Left colon (tissue), 2 donors: ENCODE measurements at regions of chr10 and their contacts with region 1.

Region 1: GRCh38 chr10:6401562-6402348 is 178.3 kb downstream of the PRKCQ start:
- DNase-seq: peak; percentile 71 to 74
- ATAC-seq: peak; percentile 99

Region 2: GRCh38 chr10:6088721-6089390 is 312.9 kb before region 1 on chr10 and contains the start of gene RBM17:
- intact Hi-C with region 1: loop called in 1 of 2 experiments (anchors 10 kb)
- DNase-seq: peak; percentile 95 to 96
- ATAC-seq: peak; percentile 90
- total RNA-seq, gene RBM17: 71.7 to 90.7 TPM

Region 3: GRCh38 chr10:6108603-6109443 is 292.9 kb before region 1 on chr10:
- intact Hi-C with region 1: loop called in 1 of 2 experiments (anchors 2 kb)
- DNase-seq: peak in 1 of 2 donors; percentile 42
- ATAC-seq: peak; percentile 72

Region 4: DNA sequence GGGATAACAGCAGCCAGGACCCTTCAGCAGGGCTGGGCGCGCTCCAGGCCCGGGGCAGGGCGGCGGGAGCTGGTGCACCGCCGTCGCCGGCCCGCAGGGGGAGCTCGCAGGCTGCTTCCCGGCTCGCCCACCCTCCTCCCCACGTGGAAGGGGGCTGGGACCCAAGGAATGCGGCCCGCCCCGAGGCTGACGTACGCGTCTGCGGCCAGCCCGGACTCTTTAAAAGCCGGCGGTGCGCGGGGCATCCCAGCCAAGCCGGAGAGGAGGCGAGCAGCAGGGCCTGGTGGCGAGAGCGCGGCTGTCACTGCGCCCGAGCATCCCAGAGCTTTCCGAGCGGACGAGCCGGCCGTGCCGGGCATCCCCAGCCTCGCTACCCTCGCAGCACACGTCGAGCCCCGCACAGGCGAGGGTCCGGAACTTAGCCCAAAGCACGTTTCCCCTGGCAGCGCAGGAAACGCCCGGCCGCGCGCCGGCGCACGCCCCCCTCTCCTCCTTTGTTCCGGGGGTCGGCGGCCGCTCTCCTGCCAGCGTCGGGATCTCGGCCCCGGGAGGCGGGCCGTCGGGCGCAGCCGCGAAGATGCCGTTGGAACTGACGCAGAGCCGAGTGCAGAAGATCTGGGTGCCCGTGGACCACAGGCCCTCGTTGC is 198.9 kb before region 1 on chr10 and contains the start of gene PFKFB3:
- intact Hi-C with region 1: loop called in 1 of 2 experiments (anchors 5 kb)
- DNase-seq: peak; percentile 93 to 95
- ATAC-seq: peak; percentile 86
- total RNA-seq, gene PFKFB3: 19.1 to 20.2 TPM